A549 (cell line): ENCODE measurements at regions of chr9 and their contacts with region 1.

Region 1: DNA sequence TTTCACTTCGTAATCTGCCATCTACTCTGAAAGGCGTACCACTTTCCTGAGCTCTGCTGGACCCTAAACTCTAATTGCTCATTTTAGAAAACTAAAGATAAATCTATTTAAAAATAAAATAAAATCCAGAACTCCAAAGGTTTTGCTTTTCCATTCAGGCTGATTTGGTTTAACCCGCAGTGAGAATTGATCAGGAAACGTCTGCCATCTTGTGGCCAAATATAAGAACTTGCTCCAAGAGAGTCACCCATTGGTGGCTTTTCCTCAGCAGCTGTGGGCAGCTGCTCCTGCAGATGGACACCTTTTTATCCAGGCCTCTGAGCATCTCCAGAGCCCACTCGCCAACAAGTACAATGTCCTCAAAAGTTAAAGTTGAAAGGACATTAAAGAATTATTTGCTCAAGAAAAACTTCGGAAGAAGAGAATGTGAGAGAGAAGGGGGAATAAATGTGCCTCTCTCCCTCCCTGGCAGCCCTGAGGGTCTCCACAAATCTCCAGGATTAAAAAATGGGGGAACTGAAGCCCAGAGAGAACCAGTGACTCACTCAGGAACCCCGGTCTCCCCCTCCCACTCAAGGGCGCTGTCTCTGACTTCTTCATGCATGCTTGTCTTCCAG is 4.1 kb downstream of the SAXO1 start:
- DNase-seq: peak; percentile 66 to 83
- ATAC-seq: peak; percentile 81 to 89
- H3K4me3 ChIP-seq: no peak overlapping the region
- H3K27ac ChIP-seq: no peak overlapping the region
- H3K4me1 ChIP-seq: no peaks in the 10 kb centered on the region
- CTCF ChIP-seq: peak; percentile 79
- EP300 ChIP-seq: no peak
- POLR2A ChIP-seq: no peak
- RAD21 ChIP-seq: peak; percentile 77 to 83

Region 2: GRCh38 chr9:17810728-17811571 is 1218.0 kb before region 1 on chr9:
- CTCF ChIA-PET with region 1: interaction called, 47 read pairs
- POLR2A ChIA-PET with region 1: no interaction called
- DNase-seq: peak; percentile 17 to 49
- ATAC-seq: peak; percentile 69 to 82; a peak in 4 of 6 replicates
- H3K4me3 ChIP-seq: no peak overlapping the region
- H3K27ac ChIP-seq: no peak overlapping the region
- H3K4me1 ChIP-seq: no peaks in the 10 kb centered on the region
- CTCF ChIP-seq: peak; percentile 93
- EP300 ChIP-seq: no peak
- POLR2A ChIP-seq: no peak
- RAD21 ChIP-seq: peak; percentile 84 to 85

Region 3: GRCh38 chr9:18255158-18255629 is 773.7 kb before region 1 on chr9:
- CTCF ChIA-PET with region 1: interaction called, 49 read pairs
- POLR2A ChIA-PET with region 1: no interaction called
- DNase-seq: peak; percentile 50 to 72
- ATAC-seq: peak; percentile 84 to 93
- H3K4me3 ChIP-seq: no peak overlapping the region
- H3K27ac ChIP-seq: no peak overlapping the region
- H3K4me1 ChIP-seq: no peaks in the 10 kb centered on the region
- CTCF ChIP-seq: peak; percentile 94
- EP300 ChIP-seq: no peak
- POLR2A ChIP-seq: no peak
- RAD21 ChIP-seq: peak; percentile 87 to 89

Region 4: DNA sequence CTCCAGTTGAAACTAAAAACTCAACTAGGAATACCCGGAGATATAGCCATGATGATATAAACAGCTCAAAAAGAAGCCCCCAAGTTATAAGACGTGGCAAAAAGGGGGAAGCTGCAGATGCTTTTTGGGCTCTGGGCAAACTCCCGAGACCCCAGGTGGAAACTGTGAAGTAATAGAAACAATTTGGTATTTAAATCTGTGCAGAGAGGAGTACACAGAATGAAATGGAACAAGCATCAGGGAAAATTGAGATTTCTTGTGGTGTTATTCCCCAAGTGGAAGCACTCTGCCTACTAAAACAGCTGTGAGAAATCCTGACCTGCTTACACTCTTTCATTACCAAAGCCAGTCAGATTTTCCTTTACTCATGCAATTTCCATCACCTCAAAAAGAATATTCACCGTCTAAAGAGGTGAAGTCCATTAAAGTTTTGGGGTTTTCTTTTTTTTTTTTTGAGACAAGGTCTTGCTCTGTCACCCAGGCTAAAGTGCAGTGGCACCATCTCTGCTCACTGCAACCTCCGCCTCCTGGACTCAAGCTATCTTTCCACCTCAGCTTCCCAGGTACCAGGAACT is 19.5 kb before region 1 on chr9:
- CTCF ChIA-PET with region 1: interaction called, 18 read pairs
- POLR2A ChIA-PET with region 1: no interaction called
- DNase-seq: no peak
- ATAC-seq: no peak
- H3K4me3 ChIP-seq: no peak overlapping the region
- H3K27ac ChIP-seq: no peak overlapping the region
- H3K4me1 ChIP-seq: no peaks in the 10 kb centered on the region
- CTCF ChIP-seq: no peak
- EP300 ChIP-seq: no peak
- POLR2A ChIP-seq: no peak
- RAD21 ChIP-seq: no peak

Region 5: GRCh38 chr9:19048966-19049916 is 20.3 kb after region 1 on chr9 and contains the start of gene RRAGA:
- CTCF ChIA-PET with region 1: interaction called, 19 read pairs
- POLR2A ChIA-PET with region 1: no interaction called
- DNase-seq: peak; percentile 94 to 97
- ATAC-seq: peak; percentile 90 to 93
- H3K4me3 ChIP-seq: peak within 1 kb of the TSS; percentile 82
- H3K27ac ChIP-seq: peak within 1 kb of the TSS; percentile 92 to 95
- H3K4me1 ChIP-seq: peaks cover 21% of the 10 kb centered on the region
- CTCF ChIP-seq: peak; percentile 79
- EP300 ChIP-seq: no peak
- POLR2A ChIP-seq: peak; percentile 98
- RAD21 ChIP-seq: peak; percentile 56 to 80
- polyA plus RNA-seq, gene RRAGA: 133 and 136 TPM in 2 replicates

Region 6: DNA sequence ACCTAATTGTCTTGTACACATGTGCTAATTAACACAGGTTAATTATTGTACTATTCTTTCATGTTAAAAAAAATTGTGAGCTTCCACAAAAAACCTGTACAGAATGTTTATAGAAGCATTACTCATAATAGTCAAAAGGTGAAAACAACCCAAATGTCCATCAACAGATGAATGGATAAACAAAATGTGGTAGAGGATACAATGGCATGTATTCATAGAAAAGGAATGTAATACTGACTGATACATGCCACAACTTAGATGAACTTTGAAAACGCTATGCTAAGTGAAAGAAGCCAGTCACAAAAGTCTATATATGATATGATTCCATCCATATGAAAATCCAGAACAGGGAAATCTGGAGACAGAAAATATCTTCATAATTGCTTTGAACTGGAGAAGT is 45.9 kb after region 1 on chr9:
- CTCF ChIA-PET with region 1: no interaction called
- POLR2A ChIA-PET with region 1: no interaction called
- DNase-seq: no peak
- ATAC-seq: no peak
- H3K4me3 ChIP-seq: no peak overlapping the region
- H3K27ac ChIP-seq: no peak overlapping the region
- H3K4me1 ChIP-seq: no peaks in the 10 kb centered on the region
- CTCF ChIP-seq: no peak
- EP300 ChIP-seq: no peak
- POLR2A ChIP-seq: no peak
- RAD21 ChIP-seq: no peak

Region 7: GRCh38 chr9:19456996-19457692 is 428.2 kb after region 1 on chr9:
- CTCF ChIA-PET with region 1: interaction called, 11 read pairs
- POLR2A ChIA-PET with region 1: no interaction called
- DNase-seq: peak; percentile 68 to 81
- ATAC-seq: peak; percentile 93 to 98
- H3K4me3 ChIP-seq: peak overlapping the region; percentile 25; the same call in 1 of the 3 replicates
- H3K27ac ChIP-seq: peak overlapping the region; percentile 28 to 69; a peak in 5 of 6 replicates
- H3K4me1 ChIP-seq: 0 out of 3 replicates have a peak, but pooled peaks cover 5% of the 10 kb centered on the region
- CTCF ChIP-seq: peak; percentile 97
- EP300 ChIP-seq: no peak
- POLR2A ChIP-seq: no peak
- RAD21 ChIP-seq: peak; percentile 97